Posterior cingulate gyrus (tissue), 11 donors: ENCODE measurements at regions of chr22 and their contacts with region 1.

Region 1: GRCh38 chr22:30386960-30387827 is at the start of gene RNF215:
- DNase-seq: peak; percentile 71 to 97 (median 82)

Region 2: GRCh38 chr22:30104501-30105156 is 282.6 kb before region 1 on chr22:
- intact Hi-C with region 1: loop called (anchors 5 kb)
- DNase-seq: no peak

Region 3: GRCh38 chr22:30262917-30263741 is 124.1 kb before region 1 on chr22:
- intact Hi-C with region 1: loop called (anchors 5 kb)
- DNase-seq: peak; percentile 44 to 95 (median 78)

Region 4: GRCh38 chr22:30289134-30289979 is 97.8 kb before region 1 on chr22 and contains the start of gene CASTOR1:
- intact Hi-C with region 1: loop called (anchors 1 kb)
- DNase-seq: peak; percentile 93 to 100 (median 98)

Region 5: DNA sequence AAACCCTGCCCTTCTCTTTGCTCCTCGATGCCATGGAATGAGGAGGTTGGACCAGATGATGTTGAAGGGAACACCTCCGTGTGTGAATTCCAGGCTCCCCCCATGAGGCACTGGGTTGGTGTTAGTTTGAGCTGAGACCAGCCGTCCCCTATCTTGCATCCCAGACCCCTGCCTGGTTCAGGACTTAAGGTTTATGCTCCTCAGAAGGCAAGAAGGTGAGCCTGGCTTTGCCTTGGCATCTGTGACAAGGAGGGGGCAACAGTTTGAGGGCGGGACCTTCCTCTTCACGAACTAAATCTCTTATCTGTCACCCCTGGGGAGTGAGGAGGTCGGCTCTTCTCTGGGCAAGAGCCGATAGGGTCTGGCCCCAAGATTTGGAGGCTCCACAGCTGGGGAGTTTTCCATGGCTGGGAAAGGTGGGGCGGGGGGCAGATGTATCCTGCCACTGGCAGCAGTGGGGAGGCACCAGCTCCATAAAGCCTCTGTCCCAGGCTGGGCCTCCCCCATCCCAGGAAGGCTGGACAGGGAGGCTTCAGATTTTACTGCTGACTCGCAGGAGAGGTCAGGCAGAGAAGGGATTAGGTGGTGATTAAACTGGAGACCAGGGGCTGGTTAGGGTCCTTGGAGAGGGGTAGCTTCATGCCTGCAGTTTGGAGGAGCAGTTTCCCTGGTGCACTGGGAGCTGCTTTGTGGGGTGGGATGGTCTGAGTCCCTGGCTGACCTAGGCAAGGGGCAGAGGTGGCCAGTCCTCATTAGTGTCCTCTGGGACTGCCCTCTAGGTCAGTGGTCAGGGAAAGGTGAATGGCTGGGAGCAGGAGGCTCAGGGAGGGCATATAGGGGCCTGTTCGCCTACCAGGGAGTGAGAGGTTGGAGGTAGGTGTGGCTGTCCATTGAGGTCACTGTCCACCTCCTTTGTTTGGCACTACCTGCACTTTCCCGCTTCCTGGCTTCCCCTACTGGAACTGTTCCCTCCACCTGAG is 10.8 kb after region 1 on chr22:
- intact Hi-C with region 1: no loop called
- DNase-seq: no peak

Region 6: DNA sequence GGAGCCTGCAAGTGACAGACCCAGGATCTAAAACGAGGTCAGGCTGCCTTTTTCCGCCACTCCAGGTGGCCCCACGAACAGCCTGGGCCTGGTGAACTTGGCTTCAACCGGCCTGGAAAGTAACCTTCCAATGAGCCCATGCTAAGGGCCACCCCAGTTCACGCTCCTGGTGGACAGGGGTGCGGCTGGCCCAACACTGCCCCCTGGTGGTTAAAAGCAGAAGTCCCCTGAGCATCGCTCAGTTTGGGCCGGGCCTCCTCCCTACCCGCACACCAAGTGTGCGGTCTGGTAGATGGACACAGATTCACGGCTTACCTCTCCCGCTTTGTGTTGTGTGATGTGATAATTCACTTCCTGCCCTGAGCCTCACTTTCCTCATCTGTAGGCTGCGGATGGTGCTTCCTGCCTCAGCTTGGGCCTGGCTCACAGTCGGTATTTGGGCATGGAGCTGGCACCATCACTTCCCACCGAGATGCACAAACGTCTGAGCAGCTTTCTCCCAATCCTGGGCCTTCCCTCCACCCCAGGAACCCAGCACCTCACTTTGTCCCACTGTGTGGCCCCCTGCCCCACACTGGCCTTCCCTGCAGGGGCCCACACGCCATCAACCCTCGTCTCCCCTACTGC is 98.3 kb after region 1 on chr22:
- intact Hi-C with region 1: loop called (anchors 1 kb)
- DNase-seq: peak; percentile 23 to 94 (median 71)